Caco-2 (cell line): ENCODE measurements at regions of chr20 and their contacts with region 1.

Region 1: DNA sequence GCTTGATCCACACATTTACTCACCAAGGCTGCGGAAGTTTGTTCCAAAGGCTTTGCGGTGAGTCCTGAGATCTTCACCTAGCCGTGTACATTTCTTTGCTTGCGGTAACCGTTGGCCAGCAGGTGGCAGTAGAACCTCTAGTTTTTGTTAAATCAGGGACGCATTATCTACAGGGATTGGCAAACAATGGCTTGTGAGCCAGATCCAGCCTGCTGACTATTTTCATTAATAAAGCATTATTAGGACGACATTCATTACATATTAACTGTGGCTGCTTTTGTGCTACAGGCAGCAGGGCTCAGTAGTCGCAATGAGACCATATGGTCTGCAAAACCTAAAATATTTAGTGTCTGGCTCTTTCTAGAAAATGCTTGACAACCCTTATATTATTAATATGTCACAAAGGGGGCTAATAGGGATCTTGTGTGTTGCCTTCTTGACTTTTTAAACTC is 174.1 kb downstream of the DOK5 start:
- DNase-seq: peak; percentile 91 to 92
- H3K4me3 ChIP-seq: no peak overlapping the region
- H3K4me3 Mint-ChIP-seq: no peak overlapping the region
- H3K27ac Mint-ChIP-seq: no peak overlapping the region
- H3K4me1 ChIP-seq: peaks cover 7% of the 10 kb centered on the region
- H3K4me1 Mint-ChIP-seq: no peaks in the 10 kb centered on the region
- H3K27me3 ChIP-seq: no peaks in the 10 kb centered on the region
- H3K27me3 Mint-ChIP-seq: peaks cover 3% of the 10 kb centered on the region
- CTCF ChIP-seq: peak; percentile 98 to 99

Region 2: GRCh38 chr20:54093423-54094267 is 555.9 kb before region 1 on chr20:
- CTCF ChIA-PET with region 1: interaction called, 4 read pairs
- POLR2A ChIA-PET with region 1: no interaction called
- intact Hi-C with region 1: loop called (anchors 1 kb)
- DNase-seq: no peak
- H3K4me3 ChIP-seq: no peak overlapping the region
- H3K4me3 Mint-ChIP-seq: no peak overlapping the region
- H3K27ac Mint-ChIP-seq: no peak overlapping the region
- H3K4me1 ChIP-seq: no peaks in the 10 kb centered on the region
- H3K4me1 Mint-ChIP-seq: peaks cover 6% of the 10 kb centered on the region
- H3K27me3 ChIP-seq: no peaks in the 10 kb centered on the region
- H3K27me3 Mint-ChIP-seq: peaks cover 3% of the 10 kb centered on the region
- CTCF ChIP-seq: no peak

Region 3: GRCh38 chr20:54219751-54220426 is 429.6 kb before region 1 on chr20:
- CTCF ChIA-PET with region 1: no interaction called
- POLR2A ChIA-PET with region 1: no interaction called
- intact Hi-C with region 1: loop called (anchors 1 kb)
- DNase-seq: peak in 1 of 2 experiments; percentile 58
- H3K4me3 ChIP-seq: no peak overlapping the region
- H3K4me3 Mint-ChIP-seq: no peak overlapping the region
- H3K27ac Mint-ChIP-seq: no peak overlapping the region
- H3K4me1 ChIP-seq: no peaks in the 10 kb centered on the region
- H3K4me1 Mint-ChIP-seq: no peaks in the 10 kb centered on the region
- H3K27me3 ChIP-seq: no peaks in the 10 kb centered on the region
- H3K27me3 Mint-ChIP-seq: no peaks in the 10 kb centered on the region
- CTCF ChIP-seq: peak; percentile 70 to 78

Region 4: GRCh38 chr20:54533081-54533480 is 116.5 kb before region 1 on chr20:
- CTCF ChIA-PET with region 1: interaction called, 5 read pairs
- POLR2A ChIA-PET with region 1: no interaction called
- intact Hi-C with region 1: loop called (anchors 5 kb)
- DNase-seq: no peak
- H3K4me3 ChIP-seq: no peak overlapping the region
- H3K4me3 Mint-ChIP-seq: no peak overlapping the region
- H3K27ac Mint-ChIP-seq: no peak overlapping the region
- H3K4me1 ChIP-seq: no peaks in the 10 kb centered on the region
- H3K4me1 Mint-ChIP-seq: no peaks in the 10 kb centered on the region
- H3K27me3 ChIP-seq: no peaks in the 10 kb centered on the region
- H3K27me3 Mint-ChIP-seq: peaks cover 17% of the 10 kb centered on the region
- CTCF ChIP-seq: no peak

Region 5: GRCh38 chr20:54680872-54681619 is 31.5 kb after region 1 on chr20:
- CTCF ChIA-PET with region 1: no interaction called
- POLR2A ChIA-PET with region 1: no interaction called
- intact Hi-C with region 1: loop called (anchors 1 kb)
- DNase-seq: peak in 1 of 2 experiments; percentile 72
- H3K4me3 ChIP-seq: no peak overlapping the region
- H3K4me3 Mint-ChIP-seq: no peak overlapping the region
- H3K27ac Mint-ChIP-seq: no peak overlapping the region
- H3K4me1 ChIP-seq: no peaks in the 10 kb centered on the region
- H3K4me1 Mint-ChIP-seq: no peaks in the 10 kb centered on the region
- H3K27me3 ChIP-seq: no peaks in the 10 kb centered on the region; the same call in 1 of the 2 replicates
- H3K27me3 Mint-ChIP-seq: peaks cover 27% of the 10 kb centered on the region
- CTCF ChIP-seq: peak; percentile 88 to 95